Right ventricle myocardium inferior (tissue), 1 donor: ENCODE measurements at regions of chr16 and their contacts with region 1.

Region 1: GRCh38 chr16:77236063-77236511 is 36.9 kb downstream of the SYCE1L start:
- DNase-seq: peak; percentile 92
- ATAC-seq: peak; percentile 96

Region 2: DNA sequence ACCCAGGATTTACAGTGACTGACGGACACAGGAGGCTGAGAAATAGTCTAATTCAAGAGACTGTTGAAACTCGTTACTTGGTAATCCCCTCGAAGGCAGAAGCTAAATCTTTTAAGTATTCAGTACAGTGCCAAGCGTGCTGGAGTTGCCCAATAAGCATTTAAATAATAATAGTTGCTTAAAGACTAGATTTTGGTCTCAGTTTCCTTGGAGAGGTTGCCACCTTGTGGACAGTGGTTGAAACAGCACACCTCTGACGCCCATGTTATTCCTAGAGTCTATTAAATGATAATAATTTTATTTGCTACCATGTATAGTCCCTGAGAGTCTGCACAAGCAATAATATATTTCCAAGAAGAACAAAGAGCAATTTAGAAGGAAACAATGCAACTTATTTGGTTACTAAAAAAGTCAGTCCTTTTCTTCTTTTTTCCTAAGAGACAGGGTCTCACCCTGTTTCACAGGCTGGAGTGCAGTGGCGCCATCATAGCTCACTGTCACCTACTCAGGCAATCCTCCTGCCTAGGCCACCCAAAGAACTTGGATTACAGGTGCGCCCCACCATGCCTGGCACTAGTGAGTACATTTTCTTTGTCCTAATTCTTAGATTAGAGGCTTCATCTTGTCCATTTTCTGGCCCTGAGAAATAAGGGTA is 348.2 kb after region 1 on chr16:
- intact Hi-C with region 1: loop called (anchors 1 kb)
- DNase-seq: no peak
- ATAC-seq: no peak

Region 3: GRCh38 chr16:77660311-77660710 is 424.2 kb after region 1 on chr16:
- intact Hi-C with region 1: loop called (anchors 5 kb)
- DNase-seq: no peak
- ATAC-seq: no peak

Region 4: DNA sequence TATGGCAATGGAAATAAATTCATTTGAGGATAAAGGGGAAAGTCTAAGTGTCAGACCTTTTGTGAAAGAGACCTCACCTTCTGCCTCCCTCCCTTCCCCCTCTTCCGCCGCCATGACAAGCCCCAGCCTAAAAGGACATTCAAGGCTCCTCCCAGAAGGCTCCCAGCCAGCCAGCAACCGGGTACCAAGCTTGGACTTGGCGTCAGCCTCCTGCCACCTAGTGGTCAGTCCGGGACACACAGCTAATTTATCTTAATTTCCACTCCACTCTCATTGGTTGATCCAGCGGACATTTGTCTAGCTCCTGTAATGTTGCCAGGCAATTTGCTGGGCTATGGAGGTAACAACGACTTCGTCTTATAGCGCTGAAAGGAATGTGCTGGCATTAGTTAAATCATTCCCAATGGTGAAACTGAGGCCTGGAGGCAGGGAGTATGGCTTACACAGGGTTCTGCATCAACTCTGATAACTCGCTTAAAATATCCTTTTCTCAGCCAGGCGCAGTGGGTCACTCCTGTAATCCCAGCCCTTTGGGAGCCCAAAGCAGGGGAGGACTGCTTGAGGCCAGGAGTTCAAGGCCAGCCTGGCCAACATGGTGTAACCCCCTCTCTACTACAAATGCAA is 766.9 kb after region 1 on chr16:
- intact Hi-C with region 1: loop called (anchors 5 kb)
- DNase-seq: peak; percentile 89
- ATAC-seq: peak; percentile 86

Region 5: GRCh38 chr16:78099372-78100161 is 863.5 kb after region 1 on chr16 and contains the start of gene WWOX:
- intact Hi-C with region 1: loop called (anchors 5 kb)
- DNase-seq: peak; percentile 98
- ATAC-seq: peak; percentile 96
- total RNA-seq, gene WWOX: 13.1 TPM